ENCODE measurements at regions of chr10 and their contacts with region 1.

Region 1: DNA sequence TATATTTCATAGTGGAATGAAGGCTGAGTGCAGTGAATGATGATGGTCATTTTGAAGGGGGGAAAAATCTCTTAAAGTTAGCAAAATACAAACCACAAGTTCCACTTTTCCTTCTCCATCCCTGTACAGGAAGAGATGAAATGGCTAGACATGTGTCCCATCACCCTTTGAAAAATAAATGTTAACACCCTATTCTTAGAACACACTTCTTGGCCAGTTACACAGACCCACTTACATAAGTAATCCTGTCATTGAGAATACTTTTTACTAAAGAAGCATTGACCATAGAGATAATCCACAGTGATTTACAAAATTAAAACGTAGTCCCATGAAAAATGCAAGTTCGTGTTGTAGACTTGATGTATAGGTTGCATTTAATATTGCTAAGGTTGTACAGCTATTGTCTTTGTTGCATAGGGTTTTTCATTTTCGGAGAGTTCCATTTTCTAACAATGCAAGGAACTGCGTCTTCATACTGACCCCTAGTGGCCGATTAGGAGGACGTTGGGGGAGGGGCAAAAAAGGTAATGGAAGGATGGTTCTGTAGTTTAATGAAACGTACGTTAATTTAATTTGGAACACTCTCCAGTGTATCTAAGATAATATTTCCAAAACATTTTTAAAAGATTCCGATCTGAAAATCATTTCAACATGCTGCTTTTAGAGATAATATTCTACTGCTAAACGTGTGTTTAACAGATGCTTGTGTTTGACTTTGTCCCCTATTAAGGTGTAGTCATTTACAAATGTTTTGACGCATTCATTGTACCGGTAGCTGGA is 60.9 kb downstream of the ARMC3 start:
- DNase-seq: peak in 3 of 5 donors; percentile 30 to 55 (median 43)
- ATAC-seq: peak in 3 of 4 donors; percentile 79 to 86 (median 83)
- H3K4me3 ChIP-seq: peak overlapping the region in 1 of 12 donors; percentile 25
- H3K27ac ChIP-seq: no peak overlapping the region
- H3K4me1 ChIP-seq: peaks cover 0 to 10% (median 0%) of the 10 kb centered on the region in 12 donors
- H3K27me3 ChIP-seq: peaks cover 0 to 11% (median 0%) of the 10 kb centered on the region in 9 donors
- CTCF ChIP-seq: peak; percentile 83 to 97 (median 92)
- POLR2A ChIP-seq: no peak

Region 2: DNA sequence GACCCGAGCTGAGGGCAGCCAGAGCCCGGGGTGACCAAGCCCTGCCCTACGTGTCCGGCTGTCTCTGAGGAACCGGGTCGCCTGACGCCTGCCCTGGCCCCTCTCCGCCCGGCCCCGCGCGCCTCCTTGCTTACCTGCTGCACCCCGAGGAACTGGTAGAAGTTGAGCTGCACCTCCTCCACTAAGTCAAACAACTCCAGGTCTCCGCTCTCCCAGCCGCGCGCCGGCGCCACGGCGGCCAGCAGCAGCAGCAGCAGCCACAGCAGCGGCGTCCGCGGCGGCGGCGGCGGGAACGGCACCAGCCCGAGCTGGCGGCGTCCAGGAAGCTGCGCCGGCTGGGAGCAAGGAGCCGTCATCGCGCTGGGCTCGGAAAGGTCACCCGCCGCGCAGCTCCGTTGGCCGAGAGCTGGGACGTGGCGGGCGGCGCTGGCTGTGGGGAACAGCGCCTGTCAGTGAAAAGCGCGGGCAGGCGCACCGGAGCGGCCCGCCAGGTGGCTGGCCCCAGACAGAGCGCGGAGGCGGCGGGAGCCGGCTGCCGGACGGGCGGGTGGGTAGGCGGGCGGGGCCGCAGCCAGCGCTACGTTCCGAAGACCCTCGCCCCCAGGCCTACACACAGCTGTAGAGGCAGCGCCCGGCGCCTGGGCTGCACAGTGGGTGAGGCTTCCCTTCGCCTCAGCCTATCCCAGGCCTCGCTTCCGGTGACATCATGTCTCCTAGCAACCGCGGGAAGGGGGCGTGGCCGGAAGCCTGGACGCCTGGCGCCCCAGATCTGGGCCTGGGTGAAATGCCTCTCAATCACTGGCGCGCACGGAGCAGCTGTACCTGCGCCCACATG is 985.5 kb before region 1 on chr10 and contains the start of gene DNAJC1:
- intact Hi-C with region 1: loop called in 2 of 10 experiments (anchors 5 kb)
- DNase-seq: peak; percentile 97 to 99 (median 98)
- ATAC-seq: peak; percentile 100
- H3K4me3 ChIP-seq: peak within 1 kb of the TSS; percentile 69 to 96 (median 78)
- H3K27ac ChIP-seq: peak within 1 kb of the TSS; percentile 78 to 99 (median 96)
- H3K4me1 ChIP-seq: peaks cover 0 to 26% (median 14%) of the 10 kb centered on the region in 12 donors
- H3K27me3 ChIP-seq: no peaks in the 10 kb centered on the region
- CTCF ChIP-seq: peak in 4 of 12 donors; percentile 4 to 29 (median 16)
- POLR2A ChIP-seq: peak in 1 of 2 donors; percentile 95
- total RNA-seq, gene DNAJC1: 9.5 to 68.4 (median 14.1) TPM

Region 3: DNA sequence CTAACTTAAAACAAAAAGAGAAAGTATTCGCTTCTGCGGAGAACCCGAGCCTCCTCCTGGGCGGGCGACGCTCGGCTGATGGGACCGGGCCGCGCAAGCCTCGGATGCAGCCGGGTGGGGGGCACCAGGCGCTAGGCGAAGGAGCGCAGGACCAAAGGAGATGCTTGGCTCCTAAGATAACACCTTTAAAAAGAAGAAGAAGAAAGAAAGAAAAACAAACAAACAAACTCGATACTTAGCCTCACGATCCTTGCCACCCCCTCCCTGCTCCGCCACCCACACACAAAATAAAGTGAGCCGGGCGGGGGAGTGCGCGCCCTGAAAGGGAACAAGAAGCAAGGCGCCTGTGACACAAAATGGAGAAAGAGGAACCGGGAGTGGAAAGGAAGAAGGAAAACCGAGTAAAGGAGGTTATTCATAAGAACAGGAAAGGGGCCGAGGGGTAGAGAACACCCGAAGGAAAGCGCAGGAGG is 737.0 kb before region 1 on chr10:
- intact Hi-C with region 1: loop called in 1 of 10 experiments (anchors 10 kb)
- DNase-seq: peak; percentile 65 to 81 (median 76)
- ATAC-seq: peak; percentile 62 to 78 (median 68)
- H3K4me3 ChIP-seq: peak overlapping the region; percentile 65 to 85 (median 76)
- H3K27ac ChIP-seq: peak overlapping the region; percentile 96 to 98 (median 97)
- H3K4me1 ChIP-seq: peaks cover 0 to 18% (median 2%) of the 10 kb centered on the region in 12 donors
- H3K27me3 ChIP-seq: no peaks in the 10 kb centered on the region
- CTCF ChIP-seq: peak in 2 of 12 donors; percentile 6 to 15
- POLR2A ChIP-seq: no peak

Region 4: DNA sequence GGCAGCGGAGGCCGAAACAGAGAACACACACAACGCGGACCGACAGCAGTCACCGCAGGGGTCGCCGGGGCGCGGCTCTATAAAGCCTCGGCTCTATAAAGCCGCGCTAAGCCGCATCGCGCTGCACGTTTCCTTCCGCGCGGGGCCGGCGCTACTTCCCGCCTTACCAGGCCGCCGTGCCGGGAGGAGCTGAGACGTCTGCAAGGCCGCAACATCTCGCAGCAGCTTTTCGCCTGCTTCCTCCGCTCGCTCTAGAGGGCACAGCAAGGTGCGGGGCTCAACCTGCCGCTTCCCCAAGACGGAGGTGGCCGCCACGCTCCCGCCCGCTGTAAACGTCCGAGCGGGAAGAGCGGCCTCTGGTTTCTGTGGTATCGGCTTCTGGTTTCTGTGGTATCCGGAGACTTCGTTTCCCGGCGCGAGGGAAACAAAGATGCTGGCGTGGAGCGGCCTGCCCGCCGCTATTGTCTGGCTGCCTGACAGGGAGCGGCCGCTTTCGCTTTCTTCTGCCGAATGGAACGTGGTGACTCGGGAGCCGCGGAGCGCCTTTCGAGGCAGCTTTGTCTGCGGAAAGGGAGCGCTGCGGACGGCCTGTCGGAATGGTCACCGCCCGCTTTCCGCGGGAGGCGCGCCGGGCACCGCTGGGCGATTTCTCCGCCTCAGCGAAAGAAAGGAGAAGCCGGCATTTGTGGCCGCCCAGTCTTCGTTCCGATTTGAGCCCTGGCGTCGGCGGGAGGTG is 551.7 kb before region 1 on chr10:
- intact Hi-C with region 1: loop called in 2 of 10 experiments (anchors 5 kb)
- DNase-seq: peak; percentile 90 to 96 (median 93)
- ATAC-seq: peak; percentile 89 to 97 (median 97)
- H3K4me3 ChIP-seq: peak overlapping the region; percentile 54 to 88 (median 76)
- H3K27ac ChIP-seq: peak overlapping the region; percentile 78 to 98 (median 95)
- H3K4me1 ChIP-seq: peaks cover 0 to 30% (median 15%) of the 10 kb centered on the region in 12 donors
- H3K27me3 ChIP-seq: peaks cover 0 to 3% (median 0%) of the 10 kb centered on the region in 9 donors
- CTCF ChIP-seq: peak in 8 of 12 donors; percentile 5 to 50 (median 27)
- POLR2A ChIP-seq: peak in 1 of 2 donors; percentile 78

Region 5: DNA sequence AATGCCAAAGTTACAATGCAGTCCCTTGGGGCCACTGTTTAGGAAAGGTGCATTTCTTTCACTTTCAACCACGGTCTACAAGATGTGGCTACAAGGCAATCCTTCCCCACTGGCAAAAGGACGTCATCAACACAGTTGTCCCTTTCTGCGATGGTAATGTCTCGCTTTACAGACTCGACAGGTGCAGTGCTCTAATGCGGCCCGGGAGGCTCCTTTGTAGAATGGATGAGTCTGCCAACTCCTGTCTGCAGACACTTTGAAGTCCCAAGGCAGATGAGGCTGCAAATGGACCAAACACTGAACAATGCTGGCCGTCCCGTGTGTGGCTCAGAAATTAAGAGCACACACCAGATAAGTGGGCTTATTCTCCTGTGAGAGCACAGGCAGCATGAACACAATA is 408.1 kb before region 1 on chr10:
- intact Hi-C with region 1: loop called in 6 of 10 experiments (anchors 2 to 10 kb)
- DNase-seq: no peak
- ATAC-seq: no peak
- H3K4me3 ChIP-seq: no peak overlapping the region
- H3K27ac ChIP-seq: no peak overlapping the region
- H3K4me1 ChIP-seq: no peaks in the 10 kb centered on the region
- H3K27me3 ChIP-seq: no peaks in the 10 kb centered on the region
- CTCF ChIP-seq: no peak
- POLR2A ChIP-seq: no peak

Measured in heart left ventricle (tissue), 16 donors.